ENCODE measurements at regions of chr17 and their contacts with region 1.

Region 1: GRCh38 chr17:39450847-39451581 is at the start of gene MED1:
- H3K4me3 Mint-ChIP-seq: peak within 1 kb of the TSS; percentile 93
- H3K27ac Mint-ChIP-seq: peak within 1 kb of the TSS; percentile 95
- H3K4me1 Mint-ChIP-seq: peaks cover 10% of the 10 kb centered on the region
- H3K27me3 Mint-ChIP-seq: no peaks in the 10 kb centered on the region

Region 2: GRCh38 chr17:39461113-39461925 is 10.3 kb after region 1 on chr17 and contains the start of gene CDK12:
- intact Hi-C with region 1: loop called (anchors 1 kb)
- H3K4me3 Mint-ChIP-seq: peak within 1 kb of the TSS; percentile 87
- H3K27ac Mint-ChIP-seq: peak within 1 kb of the TSS; percentile 98
- H3K4me1 Mint-ChIP-seq: peaks cover 23% of the 10 kb centered on the region
- H3K27me3 Mint-ChIP-seq: no peaks in the 10 kb centered on the region